PC-3 (cell line): ENCODE measurements at regions of chr4 and their contacts with region 1.

Region 1: DNA sequence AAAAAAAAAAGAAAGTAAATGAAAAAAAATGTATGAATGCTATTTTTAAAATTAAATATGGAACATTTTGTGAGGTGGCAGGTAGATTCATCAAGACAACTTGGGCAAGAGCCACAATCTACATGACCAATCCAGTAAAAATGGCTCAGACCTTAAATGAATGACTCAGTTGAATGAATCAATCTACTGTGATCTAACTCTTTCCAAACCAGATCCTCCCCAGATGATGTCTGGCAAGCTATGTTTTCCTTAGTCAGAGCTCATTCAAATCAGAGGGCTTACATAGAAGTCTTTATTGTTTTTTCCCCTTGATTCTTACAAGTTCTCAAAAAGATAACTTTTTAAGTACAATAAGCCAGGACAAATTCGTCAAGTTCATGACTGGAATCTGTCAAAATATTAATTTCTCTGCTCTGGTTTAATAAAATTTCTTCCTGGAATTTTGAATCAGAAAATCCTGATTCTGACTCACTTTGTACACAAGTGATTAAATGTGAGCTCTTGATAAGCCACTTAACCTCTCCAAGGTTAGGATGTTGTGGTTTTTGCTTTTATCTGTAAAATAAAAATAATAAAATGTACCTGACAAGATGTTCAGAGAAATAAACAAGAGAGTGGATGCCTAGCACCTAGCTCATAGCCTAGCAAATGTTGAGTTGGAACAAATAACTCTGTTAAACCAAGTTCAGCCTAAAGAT is 105.6 kb upstream of the SMIM31 start:
- DNase-seq: peak; percentile 91
- ATAC-seq: peak; percentile 89
- H3K4me3 ChIP-seq: peak overlapping the region; percentile 44; the same call in 1 of the 2 replicates
- H3K27ac ChIP-seq: peak overlapping the region; percentile 98
- H3K4me1 ChIP-seq: peaks cover 11% of the 10 kb centered on the region
- H3K27me3 ChIP-seq: no peaks in the 10 kb centered on the region
- CTCF ChIP-seq: no peak

Region 2: DNA sequence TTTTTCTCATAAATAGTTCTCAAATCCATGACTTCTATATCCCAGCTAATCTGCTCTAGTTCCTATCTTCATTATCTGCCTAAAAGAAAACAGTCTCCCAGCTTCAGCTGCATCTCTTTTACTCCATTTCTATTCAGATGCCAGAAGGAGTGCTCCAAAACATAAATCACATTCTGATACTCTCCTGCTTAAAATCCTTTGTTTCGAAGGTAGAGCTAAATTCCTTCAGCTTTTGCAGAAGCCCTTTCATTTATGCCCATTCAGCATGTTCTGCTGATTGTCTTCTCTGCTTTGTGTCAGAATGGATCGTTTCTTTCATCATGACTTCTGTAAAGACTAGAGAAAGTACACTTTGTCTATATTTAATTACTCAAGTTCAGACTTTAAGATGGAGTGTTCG is 334.4 kb before region 1 on chr4:
- CTCF ChIA-PET with region 1: no interaction called
- POLR2A ChIA-PET with region 1: no interaction called
- intact Hi-C with region 1: loop called (anchors 1 kb)
- DNase-seq: no peak
- ATAC-seq: no peak
- H3K4me3 ChIP-seq: no peak overlapping the region
- H3K27ac ChIP-seq: no peak overlapping the region
- H3K4me1 ChIP-seq: no peaks in the 10 kb centered on the region
- H3K27me3 ChIP-seq: no peaks in the 10 kb centered on the region
- CTCF ChIP-seq: no peak

Region 3: DNA sequence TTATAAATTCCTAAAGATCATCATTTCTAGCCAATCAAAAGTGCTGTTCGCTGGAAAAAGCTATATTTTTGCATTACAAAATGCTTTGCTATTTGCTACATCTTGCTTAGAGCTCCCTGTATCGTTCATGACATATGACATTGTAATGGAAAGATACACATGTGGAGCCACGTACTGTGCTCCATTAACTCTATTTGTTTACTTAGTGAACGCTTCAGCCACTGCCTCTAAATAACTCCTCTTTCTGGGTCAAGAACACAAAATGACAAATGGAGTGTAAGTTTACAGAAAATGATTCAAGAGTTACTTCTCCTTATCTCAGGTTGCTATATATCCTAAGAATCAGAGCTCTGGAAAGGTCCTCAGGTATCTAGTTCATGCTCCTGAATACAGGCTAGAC is 223.5 kb before region 1 on chr4:
- CTCF ChIA-PET with region 1: no interaction called
- POLR2A ChIA-PET with region 1: no interaction called
- intact Hi-C with region 1: loop called (anchors 5 kb)
- DNase-seq: peak; percentile 36
- ATAC-seq: peak; percentile 15; the same call in 1 of the 2 replicates
- H3K4me3 ChIP-seq: no peak overlapping the region
- H3K27ac ChIP-seq: 0 out of 2 replicates have a peak overlapping the region, but pooled peaks have one; percentile 13
- H3K4me1 ChIP-seq: peaks cover 18% of the 10 kb centered on the region
- H3K27me3 ChIP-seq: no peaks in the 10 kb centered on the region
- CTCF ChIP-seq: no peak

Region 4: DNA sequence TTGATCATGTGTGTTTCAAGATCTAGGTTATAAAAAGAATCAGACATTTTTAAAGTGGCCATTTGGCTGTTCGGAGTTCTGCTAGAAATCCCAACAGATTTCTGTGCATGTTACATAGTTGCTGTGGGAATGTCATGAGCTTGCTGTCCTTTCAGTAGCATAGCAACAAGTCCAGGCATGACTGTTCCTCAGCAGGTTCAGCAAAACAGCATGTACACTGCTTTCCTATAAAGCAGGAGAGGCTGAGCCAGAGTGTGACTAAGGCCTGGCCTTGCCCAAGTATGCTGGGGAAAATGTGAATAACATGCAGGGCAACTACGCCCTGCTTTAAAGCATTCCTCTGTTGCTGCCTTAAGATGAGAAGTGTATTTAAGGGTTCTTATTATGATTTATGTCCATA is 111.5 kb before region 1 on chr4:
- CTCF ChIA-PET with region 1: no interaction called
- POLR2A ChIA-PET with region 1: no interaction called
- intact Hi-C with region 1: loop called (anchors 2 kb)
- DNase-seq: peak; percentile 81
- ATAC-seq: peak; percentile 100
- H3K4me3 ChIP-seq: no peak overlapping the region
- H3K27ac ChIP-seq: 0 out of 2 replicates have a peak overlapping the region, but pooled peaks have one; percentile 6
- H3K4me1 ChIP-seq: peaks cover 10% of the 10 kb centered on the region
- H3K27me3 ChIP-seq: no peaks in the 10 kb centered on the region
- CTCF ChIP-seq: no peak

Region 5: DNA sequence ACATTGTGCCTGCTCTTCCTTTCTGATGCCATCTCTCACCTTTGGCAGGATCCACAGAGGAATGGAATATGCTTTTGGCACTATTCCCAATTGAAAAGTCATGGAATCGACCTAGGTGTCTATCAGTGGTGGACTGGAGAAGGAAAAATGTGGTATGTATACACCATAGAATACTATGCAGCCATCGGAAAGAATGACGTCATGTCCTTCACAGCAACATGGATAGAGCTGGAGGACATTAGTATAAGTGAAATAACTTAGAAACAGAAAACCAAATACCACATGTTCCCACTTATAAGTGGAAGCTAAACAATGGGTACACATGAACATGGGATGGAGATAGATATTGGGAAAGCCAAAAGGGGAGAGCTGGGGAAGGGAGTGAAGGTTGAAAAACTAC is 47.3 kb after region 1 on chr4:
- CTCF ChIA-PET with region 1: no interaction called
- POLR2A ChIA-PET with region 1: no interaction called
- intact Hi-C with region 1: loop called (anchors 5 kb)
- DNase-seq: no peak
- ATAC-seq: no peak
- H3K4me3 ChIP-seq: no peak overlapping the region
- H3K27ac ChIP-seq: no peak overlapping the region
- H3K4me1 ChIP-seq: 0 out of 2 replicates have a peak, but pooled peaks cover 3% of the 10 kb centered on the region
- H3K27me3 ChIP-seq: no peaks in the 10 kb centered on the region
- CTCF ChIP-seq: no peak